Lower leg skin (tissue), 4 donors: ENCODE measurements at regions of chr18 and their contacts with region 1.

Region 1: GRCh38 chr18:57803103-57803969 is at the start of gene ATP8B1:
- DNase-seq: peak; percentile 76 to 96
- H3K4me3 ChIP-seq: peak within 1 kb of the TSS; percentile 76
- CTCF ChIP-seq: no peak
- POLR2A ChIP-seq: no peak
- total RNA-seq, gene ATP8B1: 21.6 to 32.1 (median 26.8) TPM

Region 2: GRCh38 chr18:57621246-57621604 is 182.1 kb before region 1 on chr18:
- intact Hi-C with region 1: loop called (anchors 10 kb)
- DNase-seq: peak in 1 of 2 donors; percentile 86
- H3K4me3 ChIP-seq: peak overlapping the region; percentile 62
- CTCF ChIP-seq: no peak
- POLR2A ChIP-seq: no peak

Region 3: DNA sequence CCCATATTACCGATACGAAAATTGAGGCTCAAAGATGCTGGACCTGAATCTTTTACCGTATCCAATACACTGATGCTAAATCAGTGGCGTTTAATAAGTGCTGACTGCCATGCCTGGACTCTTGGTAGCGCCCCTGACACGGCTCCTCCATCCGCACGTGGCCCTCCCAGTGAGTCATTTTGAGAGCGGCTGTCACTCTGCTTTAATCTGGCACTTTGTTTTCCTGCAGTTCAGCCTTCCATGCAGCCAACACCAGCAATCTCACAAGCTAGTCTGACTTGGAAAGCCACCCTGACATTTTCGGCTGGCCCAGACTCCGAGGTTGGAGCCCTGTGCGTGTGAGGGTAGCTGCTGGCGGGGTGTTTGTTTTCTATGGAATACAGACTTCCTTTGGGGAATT is 1710.9 kb after region 1 on chr18:
- intact Hi-C with region 1: no loop called
- DNase-seq: peak; percentile 79 to 94
- H3K4me3 ChIP-seq: no peak overlapping the region
- CTCF ChIP-seq: no peak
- POLR2A ChIP-seq: no peak